ENCODE measurements at regions of chr2 and their contacts with region 1.

Region 1: GRCh38 chr2:42169874-42170521 is 845 bp downstream of the EML4 start:
- DNase-seq: no peak
- H3K4me3 ChIP-seq: peak overlapping the region; percentile 72 to 86 (median 80)
- H3K27ac ChIP-seq: peak overlapping the region; percentile 89 to 99 (median 97)
- H3K4me1 ChIP-seq: peaks cover 30 to 73% (median 50%) of the 10 kb centered on the region in 6 donors
- H3K27me3 ChIP-seq: no peaks in the 10 kb centered on the region
- CTCF ChIP-seq: no peak
- POLR2A ChIP-seq: peak in 1 of 3 donors; percentile 55

Region 2: GRCh38 chr2:41355797-41356196 is 814.2 kb before region 1 on chr2:
- intact Hi-C with region 1: no loop called
- DNase-seq: no peak
- H3K4me3 ChIP-seq: no peak overlapping the region
- H3K27ac ChIP-seq: no peak overlapping the region
- H3K4me1 ChIP-seq: no peaks in the 10 kb centered on the region
- H3K27me3 ChIP-seq: no peaks in the 10 kb centered on the region
- CTCF ChIP-seq: no peak
- POLR2A ChIP-seq: no peak

Region 3: DNA sequence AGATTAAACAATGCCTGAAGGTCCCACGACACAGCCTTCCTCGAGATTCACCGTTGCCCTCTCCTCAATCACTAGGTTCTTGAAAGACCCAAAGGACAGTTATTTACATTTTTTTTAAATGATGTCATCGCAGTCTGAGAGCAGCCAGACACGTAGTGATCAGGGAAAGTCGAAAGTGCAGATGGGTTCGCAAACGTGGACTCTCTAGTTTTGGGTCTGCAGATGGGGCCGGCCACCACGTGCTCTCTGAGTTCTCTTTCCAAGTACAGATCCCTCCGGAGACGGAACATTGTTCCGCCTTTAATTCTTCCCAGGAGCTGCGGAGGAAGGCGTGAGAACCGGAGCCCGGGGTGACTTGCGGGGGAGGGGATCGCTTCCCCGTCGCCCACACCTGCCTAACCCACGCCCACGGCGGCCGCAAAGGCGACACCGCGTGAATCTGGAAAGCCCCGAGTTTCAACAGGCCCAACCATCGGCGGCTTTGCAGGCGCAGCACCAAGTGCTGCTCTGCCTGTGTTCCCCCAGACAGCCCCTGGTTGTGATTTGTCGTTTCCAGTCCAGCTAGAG is 67.9 kb before region 1 on chr2:
- intact Hi-C with region 1: loop called (anchors 10 kb)
- DNase-seq: peak; percentile 96
- H3K4me3 ChIP-seq: peak overlapping the region in 7 of 8 donors; percentile 32 to 67 (median 39)
- H3K27ac ChIP-seq: peak overlapping the region; percentile 86 to 98 (median 96)
- H3K4me1 ChIP-seq: peaks cover 83 to 100% (median 99%) of the 10 kb centered on the region in 6 donors
- H3K27me3 ChIP-seq: no peaks in the 10 kb centered on the region
- CTCF ChIP-seq: no peak
- POLR2A ChIP-seq: no peak

Region 4: GRCh38 chr2:42659609-42660008 is 489.6 kb after region 1 on chr2:
- intact Hi-C with region 1: no loop called
- DNase-seq: no peak
- H3K4me3 ChIP-seq: no peak overlapping the region
- H3K27ac ChIP-seq: no peak overlapping the region
- H3K4me1 ChIP-seq: peaks cover 0 to 17% (median 12%) of the 10 kb centered on the region in 6 donors
- H3K27me3 ChIP-seq: no peaks in the 10 kb centered on the region
- CTCF ChIP-seq: no peak
- POLR2A ChIP-seq: no peak